ENCODE measurements at regions of chr11 and their contacts with region 1.

Region 1: GRCh38 chr11:110797453-110797852 is 85.2 kb upstream of the ARHGAP20 start:
- DNase-seq: peak; percentile 71 to 97 (median 89)
- H3K4me3 ChIP-seq: no peak overlapping the region
- H3K4me3 Mint-ChIP-seq: peak overlapping the region in 1 of 2 donors; percentile 43
- H3K27ac ChIP-seq: peak overlapping the region; percentile 59 to 82
- H3K27ac Mint-ChIP-seq: peak overlapping the region; percentile 49 to 95 (median 91)
- H3K4me1 ChIP-seq: peaks cover 21 to 32% of the 10 kb centered on the region in 2 donors
- H3K4me1 Mint-ChIP-seq: peaks cover 26% of the 10 kb centered on the region
- H3K27me3 ChIP-seq: no peaks in the 10 kb centered on the region
- H3K27me3 Mint-ChIP-seq: peaks cover 0 to 4% (median 3%) of the 10 kb centered on the region in 3 donors
- CTCF ChIP-seq: no peak

Region 2: GRCh38 chr11:110711776-110712658 is 85.4 kb before region 1 on chr11 and contains the start of gene ARHGAP20:
- intact Hi-C with region 1: no loop called
- DNase-seq: peak in 2 of 3 donors; percentile 9 to 17
- H3K4me3 ChIP-seq: peak within 1 kb of the TSS; percentile 26 to 77 (median 35)
- H3K4me3 Mint-ChIP-seq: peak within 1 kb of the TSS; percentile 76 to 97
- H3K27ac ChIP-seq: no peak within 1 kb of the TSS
- H3K27ac Mint-ChIP-seq: peak within 1 kb of the TSS in 1 of 7 donors; percentile 13
- H3K4me1 ChIP-seq: peaks cover 22 to 27% of the 10 kb centered on the region in 2 donors
- H3K4me1 Mint-ChIP-seq: peaks cover 24% of the 10 kb centered on the region
- H3K27me3 ChIP-seq: peaks cover 62 to 75% of the 10 kb centered on the region in 2 donors
- H3K27me3 Mint-ChIP-seq: peaks cover 62 to 75% (median 63%) of the 10 kb centered on the region in 3 donors
- CTCF ChIP-seq: no peak
- polyA plus RNA-seq, gene ARHGAP20: 0.04 TPM in 1 of 3 donors, not detected in the others

Region 3: GRCh38 chr11:110866091-110866490 is 68.6 kb after region 1 on chr11:
- intact Hi-C with region 1: no loop called
- DNase-seq: no peak
- H3K4me3 ChIP-seq: no peak overlapping the region
- H3K4me3 Mint-ChIP-seq: no peak overlapping the region
- H3K27ac ChIP-seq: no peak overlapping the region
- H3K27ac Mint-ChIP-seq: no peak overlapping the region
- H3K4me1 ChIP-seq: no peaks in the 10 kb centered on the region
- H3K4me1 Mint-ChIP-seq: no peaks in the 10 kb centered on the region
- H3K27me3 ChIP-seq: no peaks in the 10 kb centered on the region
- H3K27me3 Mint-ChIP-seq: no peaks in the 10 kb centered on the region
- CTCF ChIP-seq: no peak

Region 4: GRCh38 chr11:110972640-110973039 is 175.2 kb after region 1 on chr11:
- intact Hi-C with region 1: loop called in 1 of 2 experiments (anchors 10 kb)
- DNase-seq: peak; percentile 73 to 93 (median 88)
- H3K4me3 ChIP-seq: no peak overlapping the region
- H3K4me3 Mint-ChIP-seq: peak overlapping the region in 1 of 2 donors; percentile 35
- H3K27ac ChIP-seq: peak overlapping the region in 1 of 2 donors; percentile 24
- H3K27ac Mint-ChIP-seq: peak overlapping the region; percentile 58 to 92 (median 74)
- H3K4me1 ChIP-seq: peaks cover 50 to 66% of the 10 kb centered on the region in 2 donors
- H3K4me1 Mint-ChIP-seq: peaks cover 59% of the 10 kb centered on the region
- H3K27me3 ChIP-seq: no peaks in the 10 kb centered on the region
- H3K27me3 Mint-ChIP-seq: no peaks in the 10 kb centered on the region
- CTCF ChIP-seq: no peak